ENCODE measurements at regions of chr3 and their contacts with region 1.

Region 1: DNA sequence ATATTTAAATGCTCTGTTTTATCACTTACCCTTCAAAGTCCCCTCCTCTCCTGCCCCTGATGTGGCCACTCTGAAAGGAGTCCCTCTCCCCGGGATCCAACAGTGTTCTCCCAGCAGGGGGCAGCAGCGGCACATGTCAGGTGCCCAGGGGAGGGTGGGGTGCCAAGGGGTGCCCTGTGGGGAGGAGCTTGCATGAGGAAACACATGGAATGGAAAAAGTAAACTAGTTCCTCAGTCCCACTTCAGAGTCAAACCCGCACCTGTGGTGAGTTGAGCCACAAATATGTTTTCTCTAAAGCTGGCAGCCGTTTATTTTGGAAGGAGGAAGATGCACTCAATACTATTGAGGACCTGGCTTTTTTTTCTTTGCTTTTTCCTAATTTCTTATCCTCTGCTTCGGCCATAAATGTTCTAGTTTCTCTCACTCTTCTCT is 30.1 kb upstream of the NRROS start:
- DNase-seq: peak; percentile 94
- H3K4me3 ChIP-seq: no peak overlapping the region
- H3K27ac ChIP-seq: peak overlapping the region in 3 of 4 donors; percentile 7 to 67 (median 52)
- H3K4me1 ChIP-seq: peaks cover 0 to 22% (median 15%) of the 10 kb centered on the region in 4 donors
- H3K27me3 ChIP-seq: no peaks in the 10 kb centered on the region
- CTCF ChIP-seq: peak; percentile 77 to 93 (median 82)
- EP300 ChIP-seq: no peak
- POLR2A ChIP-seq: no peak

Region 2: GRCh38 chr3:196632046-196632751 is 22.8 kb after region 1 on chr3:
- intact Hi-C with region 1: loop called (anchors 2 kb)
- DNase-seq: peak; percentile 87
- H3K4me3 ChIP-seq: peak overlapping the region; percentile 47 to 65 (median 61)
- H3K27ac ChIP-seq: peak overlapping the region; percentile 82 to 92 (median 86)
- H3K4me1 ChIP-seq: peaks cover 0 to 27% (median 16%) of the 10 kb centered on the region in 4 donors
- H3K27me3 ChIP-seq: no peaks in the 10 kb centered on the region
- CTCF ChIP-seq: peak in 1 of 4 experiments; percentile 39
- EP300 ChIP-seq: no peak
- POLR2A ChIP-seq: peak; percentile 25 to 49

Region 3: DNA sequence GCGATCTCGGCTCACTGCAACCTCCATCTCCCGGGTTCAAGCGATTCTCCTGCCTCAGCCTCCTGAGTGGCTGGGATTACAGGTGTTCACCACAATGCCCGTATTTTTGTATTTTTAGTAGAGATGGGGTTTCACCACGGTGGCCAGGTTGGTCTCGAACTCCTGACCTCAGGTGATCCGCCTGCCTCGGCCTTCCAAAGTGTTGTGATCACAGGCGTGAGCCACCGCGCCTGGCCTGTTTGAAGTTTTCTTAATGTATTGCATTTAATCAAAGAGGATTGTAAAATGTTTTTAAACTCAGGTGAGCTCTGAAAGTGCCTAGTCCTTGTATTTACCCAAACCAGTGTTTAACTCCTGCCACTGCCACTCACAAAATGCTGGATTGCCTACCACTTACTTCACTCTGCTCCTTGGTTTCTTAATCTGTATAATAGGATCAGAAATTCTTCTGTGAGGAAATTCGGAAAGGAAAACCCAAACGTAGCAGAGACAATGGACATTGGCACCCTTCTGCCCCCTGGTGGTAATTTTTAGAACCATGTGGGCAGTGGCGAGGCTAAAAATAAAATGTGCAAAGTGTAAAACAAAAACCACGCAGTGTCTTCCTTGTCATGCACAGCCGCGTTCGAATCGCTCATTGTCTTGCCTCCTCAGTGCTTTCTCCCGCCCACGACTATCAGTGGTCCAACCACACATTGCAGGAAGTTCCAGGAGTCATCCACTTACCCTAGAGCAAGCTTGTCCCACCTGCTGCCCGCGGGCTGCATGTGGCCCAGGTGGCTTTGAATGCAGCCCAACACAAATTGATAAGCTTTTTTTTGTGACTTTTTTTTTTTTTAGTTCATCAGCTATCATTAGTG is 75.4 kb after region 1 on chr3:
- intact Hi-C with region 1: loop called (anchors 1 kb)
- DNase-seq: peak; percentile 75
- H3K4me3 ChIP-seq: no peak overlapping the region
- H3K27ac ChIP-seq: peak overlapping the region in 1 of 4 donors; percentile 8
- H3K4me1 ChIP-seq: peaks cover 0 to 9% (median 8%) of the 10 kb centered on the region in 4 donors
- H3K27me3 ChIP-seq: no peaks in the 10 kb centered on the region
- CTCF ChIP-seq: peak; percentile 84 to 94 (median 87)
- EP300 ChIP-seq: no peak
- POLR2A ChIP-seq: no peak